ENCODE measurements at regions of chr3 and their contacts with region 1.

Region 1: DNA sequence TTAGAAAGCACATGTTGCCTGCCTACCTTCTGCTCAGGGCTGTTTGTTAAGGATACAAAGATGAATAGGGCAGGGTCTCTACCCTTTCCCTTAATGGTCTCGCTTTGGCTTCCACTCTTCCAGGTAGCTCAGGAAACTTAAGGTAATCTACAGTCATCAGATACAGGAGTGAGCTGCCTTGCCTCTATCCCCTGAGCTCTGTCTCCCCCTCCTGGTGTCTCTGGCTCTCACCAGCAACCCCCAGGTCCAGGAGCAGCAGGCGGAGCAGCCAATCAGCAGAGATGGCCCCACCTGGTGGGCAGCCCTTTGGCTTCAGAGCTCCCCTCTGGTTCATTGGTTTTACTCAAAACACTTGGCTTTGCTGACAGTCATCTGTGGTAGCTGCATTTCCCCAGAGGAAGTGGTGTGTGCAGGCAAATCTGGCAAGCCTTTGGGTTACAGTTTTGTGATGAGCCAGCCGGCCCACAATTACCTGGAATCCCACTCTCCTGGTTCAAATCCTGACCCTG is 8.5 kb upstream of the CX3CR1 start:
- DNase-seq: peak; percentile 95
- ATAC-seq: peak; percentile 97
- H3K4me3 Mint-ChIP-seq: no peak overlapping the region
- H3K27ac Mint-ChIP-seq: peak overlapping the region; percentile 39
- H3K4me1 Mint-ChIP-seq: peaks cover 50% of the 10 kb centered on the region
- H3K27me3 Mint-ChIP-seq: peaks cover 3% of the 10 kb centered on the region

Region 2: DNA sequence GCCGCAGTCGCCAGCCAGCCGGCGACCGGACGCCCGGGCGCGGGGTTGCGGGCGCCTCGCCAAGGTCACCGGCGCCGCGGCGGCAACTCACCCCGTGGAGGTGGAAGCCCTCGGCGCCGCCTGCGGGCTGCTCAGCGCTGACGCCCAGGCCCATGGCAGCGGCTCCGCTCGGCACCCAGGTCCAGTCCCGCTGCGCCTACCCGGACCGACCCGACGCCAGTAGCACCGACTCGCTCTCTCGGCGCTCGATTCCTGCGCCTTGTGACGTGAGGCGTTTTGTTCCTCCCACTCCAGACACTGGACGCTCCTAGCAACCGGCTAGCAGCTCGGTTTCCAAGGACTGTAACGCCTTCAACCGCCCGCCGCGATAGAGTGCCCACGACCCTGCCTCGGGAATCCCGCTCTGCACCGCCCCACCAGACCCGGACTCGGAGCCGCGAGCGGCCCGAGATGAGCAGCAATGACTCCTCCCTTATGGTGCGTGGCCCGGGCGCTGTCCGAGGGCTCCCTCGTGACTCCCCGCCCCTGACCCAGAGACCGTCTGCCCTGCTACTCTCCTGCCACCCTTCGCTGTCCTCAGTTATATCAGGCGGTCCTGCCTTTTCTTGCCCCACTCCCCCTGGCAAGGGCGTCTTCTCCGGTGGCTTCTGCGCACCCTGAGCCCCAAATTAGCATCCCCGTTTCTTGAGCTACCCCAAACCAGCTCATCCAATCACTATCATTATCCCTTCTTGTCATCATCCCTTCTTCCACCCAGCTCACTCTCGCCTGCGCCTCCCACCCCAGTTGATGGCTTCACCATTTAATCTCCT is 180.8 kb before region 1 on chr3 and contains the starts of genes GORASP1 and TTC21A:
- CTCF ChIA-PET with region 1: interaction called, 37 read pairs
- DNase-seq: peak; percentile 77
- ATAC-seq: peak; percentile 69
- H3K4me3 Mint-ChIP-seq: peak within 1 kb of the TSS; percentile 92
- H3K27ac Mint-ChIP-seq: peak within 1 kb of the TSS; percentile 85
- H3K4me1 Mint-ChIP-seq: peaks cover 41% of the 10 kb centered on the region
- H3K27me3 Mint-ChIP-seq: peaks cover 10% of the 10 kb centered on the region
- total RNA-seq, gene GORASP1: 28.8 to 32.0 TPM
- total RNA-seq, gene TTC21A: 1.9 to 8.3 TPM

Region 3: DNA sequence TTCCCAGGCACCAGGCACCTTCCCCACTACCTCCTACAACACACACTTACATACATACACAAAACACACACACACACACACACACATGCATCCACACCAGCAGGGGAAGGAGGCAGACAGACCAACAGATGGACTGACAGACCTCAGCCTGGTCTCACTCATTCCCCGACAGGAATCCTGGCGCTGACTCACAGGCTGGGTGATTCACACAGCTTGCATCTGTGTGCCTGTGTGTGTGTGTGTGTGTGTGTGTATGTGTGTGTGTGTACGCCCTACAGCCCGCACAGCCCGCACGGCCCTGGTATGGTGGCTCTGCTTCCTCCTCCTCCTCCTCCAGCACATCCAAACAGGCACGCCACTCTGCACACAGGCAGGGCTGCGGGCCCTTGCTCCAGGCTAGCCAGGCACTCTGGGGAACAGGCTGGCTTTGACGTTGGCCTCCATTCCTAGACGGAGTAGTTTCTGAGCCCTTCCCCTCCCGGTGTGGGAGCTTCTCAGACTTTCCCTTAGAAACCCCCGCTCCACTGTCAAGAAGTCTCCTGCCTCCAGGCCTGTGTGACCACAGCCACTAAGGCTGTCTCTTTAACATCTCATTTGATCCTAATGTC is 141.3 kb before region 1 on chr3:
- CTCF ChIA-PET with region 1: interaction called, 11 read pairs
- DNase-seq: peak; percentile 87
- ATAC-seq: peak; percentile 45
- H3K4me3 Mint-ChIP-seq: peak overlapping the region; percentile 71
- H3K27ac Mint-ChIP-seq: peak overlapping the region; percentile 95
- H3K4me1 Mint-ChIP-seq: peaks cover 67% of the 10 kb centered on the region
- H3K27me3 Mint-ChIP-seq: no peaks in the 10 kb centered on the region

Region 4: GRCh38 chr3:39208463-39209055 is 79.8 kb before region 1 on chr3:
- CTCF ChIA-PET with region 1: interaction called, 34 read pairs
- DNase-seq: no peak
- ATAC-seq: no peak
- H3K4me3 Mint-ChIP-seq: no peak overlapping the region
- H3K27ac Mint-ChIP-seq: no peak overlapping the region
- H3K4me1 Mint-ChIP-seq: peaks cover 16% of the 10 kb centered on the region
- H3K27me3 Mint-ChIP-seq: peaks cover 30% of the 10 kb centered on the region

Region 5: GRCh38 chr3:39249453-39250115 is 38.8 kb before region 1 on chr3:
- CTCF ChIA-PET with region 1: interaction called, 10 read pairs
- DNase-seq: no peak
- ATAC-seq: peak; percentile 63
- H3K4me3 Mint-ChIP-seq: no peak overlapping the region
- H3K27ac Mint-ChIP-seq: peak overlapping the region; percentile 30
- H3K4me1 Mint-ChIP-seq: peaks cover 16% of the 10 kb centered on the region
- H3K27me3 Mint-ChIP-seq: peaks cover 40% of the 10 kb centered on the region

Region 6: GRCh38 chr3:39378088-39378487 is 89.7 kb after region 1 on chr3:
- CTCF ChIA-PET with region 1: interaction called, 107 read pairs
- DNase-seq: peak; percentile 78
- ATAC-seq: peak; percentile 80
- H3K4me3 Mint-ChIP-seq: no peak overlapping the region
- H3K27ac Mint-ChIP-seq: peak overlapping the region; percentile 45
- H3K4me1 Mint-ChIP-seq: peaks cover 22% of the 10 kb centered on the region
- H3K27me3 Mint-ChIP-seq: no peaks in the 10 kb centered on the region

Measured in activated CD8-positive, alpha-beta memory T cell treated with anti-CD3 and anti-CD28 coated beads, Interleukin-2, amount 10 ng/mL, durations not matched to agents 7 days and 5 days (primary cell).